ENCODE measurements at regions of chr10 and their contacts with region 1.

Region 1: DNA sequence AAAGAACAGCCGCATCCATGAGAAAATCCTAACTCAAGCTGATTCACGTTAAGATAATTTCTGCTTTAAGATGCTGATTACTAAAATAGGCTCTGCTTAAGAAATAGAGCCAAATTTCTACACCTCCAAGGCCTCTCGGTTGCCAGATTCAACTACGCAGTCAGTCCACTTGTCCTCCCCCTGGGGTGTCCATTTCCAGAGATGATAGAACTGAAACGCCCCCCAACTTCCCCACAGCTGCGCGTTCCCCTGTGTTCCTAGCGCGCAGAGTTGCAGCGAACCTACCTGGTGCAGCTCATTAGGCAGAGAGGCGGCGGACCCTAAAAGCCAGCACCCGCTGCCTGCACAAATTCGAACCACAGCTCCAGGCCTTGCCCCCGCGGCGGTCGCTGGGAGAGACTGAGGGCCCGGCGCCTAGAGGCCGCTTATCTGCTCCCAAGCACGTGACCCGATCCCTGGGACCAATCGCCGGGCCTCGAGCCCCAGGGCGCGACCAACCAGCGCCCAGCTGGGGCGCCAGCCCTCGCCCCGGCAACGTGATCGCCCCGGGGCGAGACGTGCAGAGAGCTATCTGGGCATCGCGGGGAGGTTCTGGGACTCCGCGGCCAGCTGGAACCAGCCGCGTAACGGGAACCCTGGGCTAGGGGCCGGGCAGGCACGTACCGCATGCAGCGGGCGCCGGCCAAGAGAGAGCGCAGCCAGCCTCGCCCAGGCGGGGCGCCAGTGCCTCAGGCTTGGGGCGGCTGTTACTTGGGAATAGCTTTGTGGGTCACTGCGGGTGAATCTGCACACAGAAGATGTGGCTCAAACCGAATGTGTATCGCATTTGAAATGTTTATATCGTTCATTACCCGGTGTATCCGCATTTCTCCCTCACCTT is at the start of gene PPP1R3C:
- DNase-seq: peak; percentile 96
- H3K4me3 ChIP-seq: peak within 1 kb of the TSS; percentile 57 to 77 (median 60)
- H3K27ac ChIP-seq: peak within 1 kb of the TSS; percentile 77 to 93 (median 86)
- H3K4me1 ChIP-seq: peaks cover 0 to 57% (median 43%) of the 10 kb centered on the region in 4 donors
- H3K27me3 ChIP-seq: no peaks in the 10 kb centered on the region
- CTCF ChIP-seq: peak in 2 of 4 experiments; percentile 10 to 17
- EP300 ChIP-seq: peak in 1 of 4 donors; percentile 28
- POLR2A ChIP-seq: peak; percentile 86 to 92
- total RNA-seq, gene PPP1R3C: 23.7 to 40.0 (median 34.4) TPM

Region 2: GRCh38 chr10:91389636-91390512 is 243.0 kb before region 1 on chr10:
- intact Hi-C with region 1: loop called (anchors 5 kb)
- DNase-seq: no peak
- H3K4me3 ChIP-seq: peak overlapping the region in 3 of 4 donors; percentile 12 to 23 (median 19)
- H3K27ac ChIP-seq: peak overlapping the region; percentile 8 to 63 (median 41)
- H3K4me1 ChIP-seq: peaks cover 0 to 10% (median 4%) of the 10 kb centered on the region in 4 donors
- H3K27me3 ChIP-seq: no peaks in the 10 kb centered on the region
- CTCF ChIP-seq: peak; percentile 24 to 66 (median 58)
- EP300 ChIP-seq: no peak
- POLR2A ChIP-seq: no peak

Region 3: DNA sequence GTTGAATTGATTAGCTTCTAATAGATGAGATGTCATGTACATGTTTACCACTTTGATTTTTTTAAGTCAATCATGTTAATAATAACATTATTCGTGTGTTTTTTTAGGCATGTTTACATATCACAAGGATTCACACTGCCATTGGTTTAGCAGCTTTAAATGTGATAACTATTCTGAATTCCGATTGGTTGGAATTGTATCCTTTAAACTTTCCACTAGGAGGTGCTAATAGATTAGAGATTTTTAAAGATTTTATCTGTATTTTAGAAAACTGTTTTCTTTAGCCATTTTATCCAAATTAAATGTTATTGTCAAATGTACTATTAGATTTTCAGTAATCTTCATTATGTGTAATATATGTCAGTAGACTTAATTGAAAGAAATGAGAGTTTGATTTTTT is 139.6 kb before region 1 on chr10:
- intact Hi-C with region 1: loop called (anchors 1 kb)
- DNase-seq: no peak
- H3K4me3 ChIP-seq: no peak overlapping the region
- H3K27ac ChIP-seq: no peak overlapping the region
- H3K4me1 ChIP-seq: no peaks in the 10 kb centered on the region
- H3K27me3 ChIP-seq: no peaks in the 10 kb centered on the region
- CTCF ChIP-seq: peak; percentile 27 to 55 (median 42)
- EP300 ChIP-seq: no peak
- POLR2A ChIP-seq: no peak

Region 4: DNA sequence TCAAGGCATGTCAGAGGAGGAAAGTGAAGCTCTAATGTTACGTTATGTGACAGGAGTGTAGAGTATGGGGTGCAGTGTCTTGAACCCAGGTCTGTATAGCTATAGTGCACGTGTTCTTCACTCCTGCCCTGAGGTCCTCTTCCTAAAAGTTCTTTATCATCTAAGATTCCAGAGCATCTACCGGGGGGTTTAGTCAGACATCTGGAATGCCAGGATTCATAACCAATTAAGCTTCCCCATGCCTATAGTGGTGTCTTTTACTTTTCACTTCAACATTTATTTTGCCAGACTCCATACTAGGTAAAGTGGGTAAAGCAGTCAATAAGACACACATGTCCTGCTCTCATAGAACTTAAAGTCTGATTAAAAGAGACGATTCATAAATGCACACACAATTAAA is 22.5 kb before region 1 on chr10:
- intact Hi-C with region 1: loop called (anchors 2 kb)
- DNase-seq: no peak
- H3K4me3 ChIP-seq: no peak overlapping the region
- H3K27ac ChIP-seq: peak overlapping the region; percentile 74 to 88 (median 82)
- H3K4me1 ChIP-seq: peaks cover 0 to 66% (median 59%) of the 10 kb centered on the region in 4 donors
- H3K27me3 ChIP-seq: no peaks in the 10 kb centered on the region
- CTCF ChIP-seq: no peak
- EP300 ChIP-seq: no peak
- POLR2A ChIP-seq: no peak

Region 5: GRCh38 chr10:91908337-91909116 is 275.6 kb after region 1 on chr10:
- intact Hi-C with region 1: loop called (anchors 5 kb)
- DNase-seq: peak; percentile 82
- H3K4me3 ChIP-seq: peak overlapping the region; percentile 60 to 85 (median 72)
- H3K27ac ChIP-seq: peak overlapping the region; percentile 65 to 74 (median 70)
- H3K4me1 ChIP-seq: peaks cover 0 to 9% (median 6%) of the 10 kb centered on the region in 4 donors
- H3K27me3 ChIP-seq: no peaks in the 10 kb centered on the region
- CTCF ChIP-seq: peak in 1 of 4 experiments; percentile 9
- EP300 ChIP-seq: no peak
- POLR2A ChIP-seq: no peak

Measured in sigmoid colon (tissue), 7 donors.